ENCODE measurements at regions of chr20 and their contacts with region 1.

Region 1: DNA sequence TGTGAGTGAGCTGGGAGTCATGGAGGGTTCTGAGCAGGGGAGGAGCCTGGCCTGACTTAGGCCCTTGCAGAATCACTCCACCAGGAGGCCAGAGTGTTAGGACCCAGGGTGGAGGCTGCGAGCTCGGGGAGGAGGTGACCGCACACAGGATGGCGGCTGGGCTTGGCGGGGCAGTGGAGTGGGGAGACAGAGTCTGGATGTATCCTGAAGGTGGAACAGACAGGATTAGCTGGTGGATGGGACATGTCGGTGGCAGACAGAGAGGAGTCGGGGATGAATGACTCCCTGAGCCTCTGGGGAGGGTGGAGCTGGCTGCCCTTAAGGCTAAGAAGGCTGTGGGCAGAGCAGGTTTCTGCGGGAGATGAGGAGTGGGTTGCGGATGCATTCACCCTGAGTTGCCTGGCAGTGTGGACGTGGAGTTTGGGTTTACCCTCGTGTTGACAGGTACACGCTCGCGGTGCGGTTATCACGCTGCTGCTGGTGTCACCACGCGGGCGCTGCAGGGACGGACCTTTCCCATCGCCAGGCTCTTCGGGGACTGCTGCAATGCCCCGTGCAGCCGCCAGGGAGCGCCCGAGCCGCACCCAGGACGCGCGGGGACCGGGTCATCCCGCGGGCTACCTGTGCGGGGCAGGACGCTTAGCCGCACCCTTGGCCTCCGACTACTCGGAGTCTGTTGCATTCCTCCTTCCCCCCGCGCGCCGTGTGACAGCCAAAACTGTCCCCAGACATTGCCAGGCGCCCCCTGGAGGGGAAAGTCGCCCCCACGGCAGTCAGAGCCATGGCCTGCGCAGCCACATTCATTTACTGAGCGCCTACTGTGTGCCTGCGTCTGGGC is 43.0 kb upstream of the PTGIS start:
- DNase-seq: peak; percentile 59 to 78 (median 68)
- H3K4me3 ChIP-seq: no peak overlapping the region
- H3K4me3 Mint-ChIP-seq: peak overlapping the region in 6 of 7 donors; percentile 50 to 83 (median 63)
- H3K27ac ChIP-seq: no peak overlapping the region
- H3K27ac Mint-ChIP-seq: peak overlapping the region in 2 of 8 donors; percentile 38 to 95
- H3K4me1 ChIP-seq: peaks cover 5% of the 10 kb centered on the region
- H3K4me1 Mint-ChIP-seq: peaks cover 12 to 18% (median 13%) of the 10 kb centered on the region in 3 donors
- H3K27me3 ChIP-seq: no peaks in the 10 kb centered on the region
- H3K27me3 Mint-ChIP-seq: peaks cover 0 to 1% of the 10 kb centered on the region in 2 donors

Region 2: GRCh38 chr20:49541733-49542513 is 69.0 kb before region 1 on chr20:
- CTCF ChIA-PET with region 1: interaction called, 62 read pairs
- POLR2A ChIA-PET with region 1: no interaction called
- DNase-seq: peak; percentile 17 to 70 (median 43)
- H3K4me3 ChIP-seq: no peak overlapping the region
- H3K4me3 Mint-ChIP-seq: no peak overlapping the region
- H3K27ac ChIP-seq: no peak overlapping the region
- H3K27ac Mint-ChIP-seq: peak overlapping the region in 2 of 8 donors; percentile 34 to 53
- H3K4me1 ChIP-seq: no peaks in the 10 kb centered on the region
- H3K4me1 Mint-ChIP-seq: peaks cover 2 to 4% (median 3%) of the 10 kb centered on the region in 3 donors
- H3K27me3 ChIP-seq: no peaks in the 10 kb centered on the region
- H3K27me3 Mint-ChIP-seq: peaks cover 4 to 7% of the 10 kb centered on the region in 2 donors

Region 3: GRCh38 chr20:49846206-49846807 is 235.4 kb after region 1 on chr20:
- CTCF ChIA-PET with region 1: interaction called, 22 read pairs
- POLR2A ChIA-PET with region 1: no interaction called
- DNase-seq: peak in 4 of 5 donors; percentile 10 to 59 (median 54)
- H3K4me3 ChIP-seq: no peak overlapping the region
- H3K4me3 Mint-ChIP-seq: no peak overlapping the region
- H3K27ac ChIP-seq: no peak overlapping the region
- H3K27ac Mint-ChIP-seq: peak overlapping the region in 1 of 8 donors; percentile 47
- H3K4me1 ChIP-seq: no peaks in the 10 kb centered on the region
- H3K4me1 Mint-ChIP-seq: peaks cover 3 to 11% (median 7%) of the 10 kb centered on the region in 3 donors
- H3K27me3 ChIP-seq: no peaks in the 10 kb centered on the region
- H3K27me3 Mint-ChIP-seq: no peaks in the 10 kb centered on the region